ENCODE measurements at regions of chr16 and their contacts with region 1.

Region 1: DNA sequence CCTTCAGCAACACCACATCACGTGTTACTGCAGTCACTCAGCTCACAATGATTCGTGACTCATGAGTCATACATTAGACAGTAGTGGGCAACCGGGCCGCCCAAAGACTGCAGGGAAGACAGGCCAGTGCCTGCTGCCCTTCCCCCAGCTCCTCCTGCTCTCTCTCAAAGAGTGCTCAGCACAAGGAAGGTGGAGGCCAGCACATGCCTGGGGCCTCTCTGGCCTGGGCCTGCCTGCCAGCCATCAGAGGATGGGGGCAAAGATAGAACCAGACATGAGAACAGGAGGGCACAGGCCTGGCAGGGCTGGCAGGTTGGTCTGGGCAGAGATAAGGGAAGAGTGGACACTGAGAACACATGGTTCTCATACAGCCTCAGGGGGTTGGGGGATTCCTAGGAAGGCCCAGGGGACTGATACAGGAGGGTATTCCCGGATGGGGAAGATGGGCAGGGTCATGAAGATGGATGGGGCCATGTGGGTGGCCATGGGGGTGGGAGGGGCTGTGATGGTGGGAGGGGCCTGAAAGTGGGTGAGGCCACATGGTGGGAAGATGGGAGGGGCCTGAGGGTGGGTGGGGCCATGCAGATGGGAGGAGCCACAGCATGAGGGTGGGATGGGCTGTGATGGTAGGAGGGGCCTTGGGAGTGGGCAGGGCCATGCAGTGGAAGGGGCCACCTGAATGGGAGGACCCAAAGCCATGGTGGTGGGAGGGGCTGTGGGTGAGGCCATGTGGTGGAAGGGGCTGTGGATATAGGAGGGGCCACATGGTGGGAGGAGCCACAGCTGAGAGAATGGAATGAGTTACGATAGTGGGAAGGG is 29.0 kb downstream of the KATNB1 start:
- DNase-seq: peak in 1 of 2 donors; percentile 77
- ATAC-seq: no peak
- H3K4me3 ChIP-seq: no peak overlapping the region
- H3K27ac ChIP-seq: no peak overlapping the region
- H3K4me1 ChIP-seq: no peaks in the 10 kb centered on the region
- H3K27me3 ChIP-seq: no peaks in the 10 kb centered on the region

Region 2: GRCh38 chr16:57485916-57486857 is 278.4 kb before region 1 on chr16 and contains the start of gene DOK4:
- intact Hi-C with region 1: no loop called
- DNase-seq: peak; percentile 89 to 95
- ATAC-seq: peak; percentile 94
- H3K4me3 ChIP-seq: peak within 1 kb of the TSS; percentile 52 to 95
- H3K27ac ChIP-seq: peak within 1 kb of the TSS; percentile 2 to 93
- H3K4me1 ChIP-seq: no peaks in the 10 kb centered on the region
- H3K27me3 ChIP-seq: no peaks in the 10 kb centered on the region
- total RNA-seq, gene DOK4: 35.5 to 44.5 TPM

Region 3: GRCh38 chr16:57802341-57803133 is 38.0 kb after region 1 on chr16 and contains the start of gene KIFC3:
- intact Hi-C with region 1: loop called in 1 of 2 experiments (anchors 5 kb)
- DNase-seq: peak; percentile 94 to 98
- ATAC-seq: peak; percentile 77
- H3K4me3 ChIP-seq: peak within 1 kb of the TSS; percentile 46 to 57
- H3K27ac ChIP-seq: peak within 1 kb of the TSS in 1 of 2 donors; percentile 38
- H3K4me1 ChIP-seq: no peaks in the 10 kb centered on the region
- H3K27me3 ChIP-seq: no peaks in the 10 kb centered on the region
- total RNA-seq, gene KIFC3: 69.7 to 80.1 TPM